Mucosa of descending colon (tissue), 3 donors: ENCODE measurements at regions of chr7 and their contacts with region 1.

Region 1: GRCh38 chr7:74401137-74401859 is 52.4 kb upstream of the GTF2IRD1 start:
- DNase-seq: peak in 2 of 3 donors; percentile 77 to 90
- ATAC-seq: peak; percentile 79
- H3K4me3 ChIP-seq: no peak overlapping the region
- H3K4me1 ChIP-seq: no peaks in the 10 kb centered on the region
- CTCF ChIP-seq: peak; percentile 94

Region 2: DNA sequence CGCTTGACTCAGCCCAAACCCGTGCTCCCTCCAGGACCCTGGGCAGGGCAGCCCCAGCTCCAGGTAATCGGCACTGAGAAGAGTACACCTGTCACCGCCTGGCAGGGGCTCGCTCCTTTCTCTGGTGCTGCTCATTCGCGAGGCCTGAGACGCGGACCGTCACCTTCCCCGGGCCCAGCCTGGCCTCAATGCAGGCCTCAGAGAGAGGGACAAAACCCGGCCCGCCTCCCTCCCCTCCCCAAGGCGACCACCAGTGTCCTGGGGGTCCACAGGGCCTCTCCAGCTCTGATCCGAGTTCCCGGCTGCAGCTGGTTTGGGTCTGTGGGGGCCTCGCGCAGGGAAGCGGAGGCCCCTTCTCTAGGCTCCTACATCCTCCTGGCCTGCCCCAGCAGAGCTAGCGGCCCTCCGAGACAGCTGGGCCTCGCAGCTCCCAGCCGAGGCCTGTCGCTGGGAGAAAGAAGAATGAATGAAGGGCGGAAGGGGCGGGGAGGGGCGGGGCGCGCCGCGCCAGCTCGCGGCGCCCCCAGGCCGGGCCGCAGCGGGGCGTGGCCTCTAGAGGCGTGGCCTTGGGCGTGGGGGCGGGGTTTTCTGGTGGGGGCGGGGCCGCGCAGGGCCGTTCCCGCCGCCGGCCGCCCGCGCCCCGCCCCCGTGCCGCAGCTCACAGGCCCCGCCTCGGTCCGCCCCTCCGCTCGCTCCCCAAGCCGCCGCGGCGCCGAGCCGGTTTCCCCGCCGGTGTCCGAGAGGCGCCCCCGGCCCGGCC is 318.0 kb before region 1 on chr7 and contains the start of gene LIMK1:
- intact Hi-C with region 1: loop called in 1 of 2 experiments (anchors 10 kb)
- DNase-seq: peak; percentile 83 to 89 (median 85)
- ATAC-seq: peak; percentile 95
- H3K4me3 ChIP-seq: peak within 1 kb of the TSS; percentile 48
- H3K4me1 ChIP-seq: peaks cover 14% of the 10 kb centered on the region
- CTCF ChIP-seq: no peak
- total RNA-seq, gene LIMK1: 12.0 to 15.6 (median 12.1) TPM

Region 3: DNA sequence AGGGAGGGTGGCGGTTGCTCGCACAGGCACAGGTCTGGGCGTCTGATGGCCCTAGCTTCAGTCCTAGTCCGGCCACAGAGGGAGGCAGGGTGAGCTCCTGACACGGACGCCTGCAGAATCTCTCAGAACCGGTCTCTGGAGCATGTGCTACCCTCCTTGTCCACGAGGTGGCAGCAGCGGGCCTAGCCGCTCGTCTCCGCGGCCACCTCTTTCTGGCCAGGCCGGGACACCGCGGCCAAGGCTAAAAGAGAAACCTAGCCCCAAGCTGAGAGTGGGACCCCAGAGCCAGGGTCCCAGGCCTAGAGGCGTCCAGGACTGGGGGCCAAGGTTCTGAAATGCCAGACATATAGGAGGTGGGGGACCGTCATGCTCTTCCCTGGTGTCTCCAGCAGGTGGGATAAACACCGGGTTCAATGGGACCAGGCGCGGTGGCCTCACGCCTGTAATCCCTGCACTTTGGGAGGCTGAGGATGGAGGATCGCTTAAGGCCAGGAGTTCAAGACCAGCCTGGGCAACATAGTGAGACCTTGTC is 194.6 kb before region 1 on chr7:
- intact Hi-C with region 1: loop called (anchors 5 kb)
- DNase-seq: peak; percentile 87 to 93 (median 92)
- ATAC-seq: peak; percentile 93
- H3K4me3 ChIP-seq: no peak overlapping the region
- H3K4me1 ChIP-seq: no peaks in the 10 kb centered on the region
- CTCF ChIP-seq: peak; percentile 93

Region 4: GRCh38 chr7:74606101-74606908 is 205.0 kb after region 1 on chr7:
- intact Hi-C with region 1: no loop called
- DNase-seq: peak; percentile 54 to 78 (median 68)
- ATAC-seq: peak; percentile 79
- H3K4me3 ChIP-seq: no peak overlapping the region
- H3K4me1 ChIP-seq: peaks cover 13% of the 10 kb centered on the region
- CTCF ChIP-seq: no peak